Gastrocnemius medialis (tissue), 4 donors: ENCODE measurements at regions of chr15 and their contacts with region 1.

Region 1: GRCh38 chr15:74635228-74635627 is 19.6 kb downstream of the CLK3 start:
- DNase-seq: peak in 1 of 2 donors; percentile 51
- ATAC-seq: peak; percentile 64 to 73
- H3K4me3 ChIP-seq: no peak overlapping the region
- H3K27ac ChIP-seq: no peak overlapping the region
- H3K4me1 ChIP-seq: peaks cover 0 to 4% of the 10 kb centered on the region in 2 donors
- H3K27me3 ChIP-seq: no peaks in the 10 kb centered on the region
- CTCF ChIP-seq: peak; percentile 83 to 89 (median 85)
- POLR2A ChIP-seq: no peak

Region 2: DNA sequence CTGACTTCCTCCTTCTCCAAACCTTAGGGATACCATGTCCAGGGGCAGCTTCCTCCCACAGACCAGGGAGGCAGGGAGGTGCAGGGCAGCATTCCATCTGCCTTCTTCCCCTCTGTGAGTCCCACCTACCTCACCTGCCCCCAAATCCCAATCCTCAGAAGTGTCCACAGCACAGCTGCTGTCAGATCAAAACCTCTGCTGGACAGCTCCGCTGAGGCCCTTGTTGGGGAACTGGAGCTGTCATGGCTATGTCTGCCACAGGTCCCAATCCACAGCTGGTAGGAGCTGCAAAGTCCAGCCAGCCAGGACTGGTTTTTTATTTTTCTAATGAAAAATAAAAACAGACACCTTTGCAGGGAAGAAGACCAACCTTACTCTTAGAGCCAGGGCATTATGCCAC is 802.6 kb before region 1 on chr15:
- in situ Hi-C with region 1: no loop called
- intact Hi-C with region 1: no loop called
- DNase-seq: no peak
- ATAC-seq: no peak
- H3K4me3 ChIP-seq: no peak overlapping the region
- H3K27ac ChIP-seq: no peak overlapping the region
- H3K4me1 ChIP-seq: no peaks in the 10 kb centered on the region
- H3K27me3 ChIP-seq: no peaks in the 10 kb centered on the region
- CTCF ChIP-seq: no peak
- POLR2A ChIP-seq: no peak

Region 3: DNA sequence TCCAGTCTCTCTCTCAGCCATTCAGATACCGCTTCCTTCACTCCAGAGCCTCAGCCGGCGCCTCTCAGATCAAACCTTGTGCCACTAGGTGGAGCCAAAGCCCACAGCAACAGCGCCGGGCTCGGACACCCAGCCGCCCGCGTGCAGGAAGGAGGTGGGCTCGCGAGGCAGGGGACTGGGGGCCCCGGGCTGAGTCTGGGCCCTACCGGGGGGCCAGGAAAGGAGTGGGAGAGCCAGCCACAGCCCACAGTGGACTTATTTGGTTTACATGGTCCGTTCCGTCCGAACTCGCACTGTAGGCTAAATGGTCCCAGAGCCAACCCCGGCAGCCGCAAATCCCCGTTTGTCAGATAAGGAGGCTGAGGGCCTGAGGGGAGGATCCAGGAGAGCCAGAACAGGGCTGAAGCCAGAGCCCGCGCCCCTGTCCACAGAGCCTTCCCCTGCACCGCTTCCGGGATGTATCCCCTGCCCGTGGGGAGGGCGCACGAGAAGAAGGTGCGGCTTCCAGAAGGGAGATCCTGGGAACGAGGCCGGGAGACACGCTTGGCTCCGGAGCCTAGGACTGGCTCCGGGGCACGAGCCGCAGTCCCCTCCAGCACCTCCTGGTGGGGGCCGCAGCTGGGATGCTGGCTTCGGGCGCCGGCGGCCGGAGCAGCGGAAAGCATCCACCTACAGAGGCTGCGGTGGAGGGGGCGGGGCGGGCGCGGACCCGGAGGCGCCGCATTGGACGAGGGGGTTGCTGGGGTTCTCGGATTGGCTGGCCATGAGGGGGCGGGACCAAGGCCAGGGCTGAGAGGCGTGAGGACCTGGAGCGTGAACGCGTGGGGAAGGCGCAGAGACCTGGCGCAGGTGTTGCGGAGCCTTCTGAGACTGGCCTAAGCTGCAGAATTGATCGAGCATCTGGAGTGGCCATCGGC is 261.2 kb before region 1 on chr15:
- in situ Hi-C with region 1: no loop called
- intact Hi-C with region 1: loop called (anchors 5 kb)
- DNase-seq: peak; percentile 83 to 91
- ATAC-seq: peak; percentile 92 to 93
- H3K4me3 ChIP-seq: peak overlapping the region; percentile 63 to 90 (median 72)
- H3K27ac ChIP-seq: no peak overlapping the region
- H3K4me1 ChIP-seq: peaks cover 10 to 15% of the 10 kb centered on the region in 2 donors
- H3K27me3 ChIP-seq: no peaks in the 10 kb centered on the region
- CTCF ChIP-seq: peak; percentile 59 to 92 (median 87)
- POLR2A ChIP-seq: no peak

Region 4: DNA sequence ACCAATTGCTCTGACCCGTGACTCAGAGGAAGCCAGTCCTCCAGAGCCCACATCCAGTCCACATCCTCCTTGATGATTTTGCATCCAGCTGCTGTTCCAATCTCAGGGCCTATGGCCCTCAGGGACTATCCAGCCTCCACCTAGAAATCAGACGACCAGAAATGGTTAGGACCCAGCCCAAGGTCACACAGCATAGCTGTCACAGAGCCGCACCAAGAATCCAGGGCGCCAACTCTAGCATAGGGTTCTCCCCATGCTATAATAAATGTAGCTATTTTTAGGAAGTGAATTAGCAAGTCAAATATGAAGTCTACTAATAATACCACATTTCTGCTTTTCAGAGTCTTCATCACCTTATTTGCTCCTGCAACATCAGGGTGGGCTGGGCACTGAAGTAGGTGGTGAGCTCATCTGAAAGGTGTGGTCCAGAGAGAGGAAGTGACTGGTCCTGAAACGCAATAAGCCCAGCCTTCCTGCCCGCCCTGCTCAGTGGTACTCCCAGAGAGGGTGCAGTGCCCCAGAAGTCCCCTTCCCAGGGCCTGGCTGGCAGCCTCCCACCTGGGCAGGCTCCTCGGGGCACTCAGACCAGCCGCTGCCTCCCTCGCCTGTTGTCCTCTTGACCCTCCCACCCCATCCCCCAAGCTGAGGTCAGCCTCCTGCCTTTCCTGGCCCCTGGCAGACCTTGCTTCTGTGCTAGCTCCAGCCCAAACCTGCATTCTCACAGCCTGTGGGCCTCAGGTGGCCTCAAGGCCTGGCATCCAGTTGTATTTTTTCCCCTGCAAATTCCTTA is 250.2 kb before region 1 on chr15:
- in situ Hi-C with region 1: no loop called
- intact Hi-C with region 1: no loop called
- DNase-seq: no peak
- ATAC-seq: no peak
- H3K4me3 ChIP-seq: no peak overlapping the region
- H3K27ac ChIP-seq: peak overlapping the region in 3 of 4 donors; percentile 19 to 54 (median 34)
- H3K4me1 ChIP-seq: peaks cover 12 to 13% of the 10 kb centered on the region in 2 donors
- H3K27me3 ChIP-seq: no peaks in the 10 kb centered on the region
- CTCF ChIP-seq: no peak
- POLR2A ChIP-seq: no peak

Region 5: DNA sequence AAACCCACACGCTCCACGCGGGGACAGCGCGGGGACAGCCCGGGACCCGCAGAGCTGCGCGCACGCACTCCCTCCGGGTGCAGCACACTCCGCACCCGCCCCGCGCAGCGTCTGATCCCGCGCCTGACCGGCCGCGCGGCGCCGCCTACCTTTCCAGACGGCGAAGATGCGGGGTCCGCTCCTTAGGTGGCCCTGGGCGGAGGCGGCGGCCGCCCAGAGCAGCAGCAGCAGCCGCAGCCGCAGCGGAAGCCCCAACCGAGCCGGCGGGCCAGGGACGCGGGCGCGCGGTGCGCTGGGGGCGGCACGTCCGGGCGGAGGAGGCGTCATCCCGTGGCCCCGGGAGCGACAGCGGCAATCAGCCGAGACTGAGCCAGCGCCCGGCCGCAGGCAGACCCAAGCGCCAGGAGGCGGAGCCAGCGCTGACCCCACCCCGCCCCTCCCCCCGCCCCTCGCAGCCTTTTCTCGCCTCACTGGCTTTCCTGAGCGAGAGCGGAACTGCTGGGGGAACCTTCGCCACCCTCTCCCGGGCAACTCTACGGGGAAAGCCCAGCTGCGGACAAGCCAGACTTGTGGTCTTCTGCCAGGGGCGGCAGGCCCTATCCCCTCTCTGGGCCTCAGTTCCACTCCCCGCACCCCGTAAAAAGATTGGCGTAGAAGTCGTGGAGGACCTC is 201.5 kb before region 1 on chr15 and contains the start of gene SEMA7A:
- in situ Hi-C with region 1: no loop called
- intact Hi-C with region 1: no loop called
- DNase-seq: peak; percentile 62 to 77
- ATAC-seq: peak; percentile 76 to 84
- H3K4me3 ChIP-seq: peak within 1 kb of the TSS; percentile 61 to 84 (median 72)
- H3K27ac ChIP-seq: peak within 1 kb of the TSS; percentile 50 to 73 (median 68)
- H3K4me1 ChIP-seq: peaks cover 0 to 9% of the 10 kb centered on the region in 2 donors
- H3K27me3 ChIP-seq: peaks cover 0 to 18% (median 7%) of the 10 kb centered on the region in 3 donors
- CTCF ChIP-seq: peak in 2 of 5 experiments; percentile 12 to 13
- POLR2A ChIP-seq: peak; percentile 77 to 79
- total RNA-seq, gene SEMA7A: 0.51 to 2.7 (median 2.4) TPM

Region 6: GRCh38 chr15:74937596-74938296 is 302.5 kb after region 1 on chr15 and contains the start of gene COX5A:
- in situ Hi-C with region 1: loop called in 3 of 4 experiments (anchors 25 kb)
- intact Hi-C with region 1: no loop called
- DNase-seq: peak; percentile 92 to 96
- ATAC-seq: peak; percentile 94 to 95
- H3K4me3 ChIP-seq: peak within 1 kb of the TSS; percentile 74 to 93 (median 90)
- H3K27ac ChIP-seq: peak within 1 kb of the TSS; percentile 96 to 100 (median 96)
- H3K4me1 ChIP-seq: peaks cover 32 to 35% of the 10 kb centered on the region in 2 donors
- H3K27me3 ChIP-seq: no peaks in the 10 kb centered on the region
- CTCF ChIP-seq: peak in 1 of 5 experiments; percentile 17
- POLR2A ChIP-seq: peak; percentile 91 to 93
- total RNA-seq, gene COX5A: 425 to 558 (median 512) TPM